ENCODE measurements at regions of chr22 and their contacts with region 1.

Region 1: DNA sequence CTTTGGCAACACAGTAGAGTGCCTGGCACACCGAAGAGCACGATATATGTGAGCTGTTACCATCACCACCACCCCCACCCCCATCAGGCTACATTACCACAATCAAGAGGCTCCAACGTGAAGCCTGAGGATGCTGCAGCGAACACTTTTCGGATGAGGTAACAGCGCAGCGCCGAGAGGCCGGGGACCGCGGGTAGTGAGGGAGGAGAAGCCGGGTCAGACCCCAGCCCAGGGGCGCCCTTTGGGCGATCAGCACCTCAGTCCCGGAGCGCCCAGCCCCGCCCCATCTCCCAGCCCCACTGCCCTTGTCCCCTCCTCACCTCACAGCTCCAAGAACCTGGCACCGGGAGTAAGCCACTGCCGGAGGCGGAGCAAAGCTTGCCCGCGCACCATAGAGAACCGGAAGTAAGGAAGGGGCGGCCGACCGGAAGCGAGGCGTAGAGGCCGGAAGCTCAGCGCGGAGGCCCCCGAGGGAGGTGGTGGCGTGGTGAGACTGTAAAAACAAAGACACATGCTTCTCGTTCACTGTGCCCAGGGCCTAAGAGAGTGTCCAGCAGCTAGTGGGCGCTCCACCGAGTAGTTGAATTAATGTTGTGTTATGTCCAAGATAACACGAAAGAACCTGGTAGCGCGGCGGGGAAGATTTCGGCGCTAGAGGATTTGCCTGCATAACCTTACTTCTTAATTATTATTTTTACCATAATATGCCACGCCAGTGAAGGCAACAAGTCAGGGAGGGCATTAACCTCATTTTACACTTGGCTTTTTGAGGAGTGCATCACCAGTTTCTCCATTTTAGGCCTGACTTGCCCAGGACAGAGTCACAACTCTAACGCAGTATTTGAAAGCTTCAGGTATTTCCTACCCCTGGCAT is at the start of gene THOC5:
- DNase-seq: peak; percentile 84
- ATAC-seq: peak; percentile 96
- H3K4me3 Mint-ChIP-seq: peak within 1 kb of the TSS; percentile 96
- H3K27ac Mint-ChIP-seq: peak within 1 kb of the TSS; percentile 98
- H3K4me1 Mint-ChIP-seq: peaks cover 16% of the 10 kb centered on the region
- H3K27me3 Mint-ChIP-seq: no peaks in the 10 kb centered on the region
- CTCF ChIP-seq: no peak
- total RNA-seq, gene THOC5: 44.1 and 51.3 TPM in 2 replicates

Region 2: GRCh38 chr22:29531419-29531818 is 22.2 kb before region 1 on chr22:
- CTCF ChIA-PET with region 1: no interaction called
- POLR2A ChIA-PET with region 1: no interaction called
- intact Hi-C with region 1: no loop called
- DNase-seq: no peak
- ATAC-seq: no peak
- H3K4me3 Mint-ChIP-seq: no peak overlapping the region
- H3K27ac Mint-ChIP-seq: no peak overlapping the region
- H3K4me1 Mint-ChIP-seq: no peaks in the 10 kb centered on the region
- H3K27me3 Mint-ChIP-seq: no peaks in the 10 kb centered on the region
- CTCF ChIP-seq: no peak

Region 3: GRCh38 chr22:29580200-29580810 is 26.7 kb after region 1 on chr22:
- CTCF ChIA-PET with region 1: no interaction called
- POLR2A ChIA-PET with region 1: interaction called, 7 read pairs
- intact Hi-C with region 1: loop called (anchors 1 kb)
- DNase-seq: no peak
- ATAC-seq: no peak
- H3K4me3 Mint-ChIP-seq: peak overlapping the region; percentile 92
- H3K27ac Mint-ChIP-seq: peak overlapping the region; percentile 86
- H3K4me1 Mint-ChIP-seq: peaks cover 18% of the 10 kb centered on the region
- H3K27me3 Mint-ChIP-seq: no peaks in the 10 kb centered on the region
- CTCF ChIP-seq: no peak

Measured in activated B cell treated with CpG ODN at 0.5 μM for 24 hours (primary cell).